GM12878 (cell line): ENCODE measurements at regions of chr4 and their contacts with region 1.

Region 1: DNA sequence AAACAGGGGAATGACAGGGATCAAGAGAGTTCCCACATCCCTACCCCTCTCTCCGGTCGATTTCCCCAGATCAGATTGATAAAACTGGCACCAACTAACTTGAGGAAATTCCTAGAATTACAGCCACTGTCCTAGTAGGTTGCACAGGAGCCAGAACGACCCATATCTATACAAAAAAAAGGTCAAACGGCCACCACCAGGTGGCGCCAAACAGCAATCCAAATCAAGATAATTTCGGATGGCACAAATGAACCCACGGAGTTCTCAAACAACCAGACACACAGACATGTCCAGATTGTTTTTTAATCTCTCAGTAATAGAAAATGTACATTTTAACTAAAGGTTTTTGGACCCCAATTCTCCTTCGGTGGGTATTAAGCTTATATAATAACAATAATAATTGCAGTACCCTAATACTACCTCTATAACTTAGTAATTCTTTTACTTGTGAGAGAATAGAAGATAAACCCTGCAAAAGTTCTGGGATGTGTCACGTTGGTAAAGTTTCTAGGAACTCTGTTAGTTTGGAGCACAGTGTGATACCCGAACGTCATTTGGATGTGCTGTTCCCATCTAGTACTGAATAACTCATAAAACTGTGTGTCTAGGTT is 212.6 kb downstream of the SPOCK3 start:
- DNase-seq: peak; percentile 30
- ATAC-seq: peak; percentile 75
- H3K4me3 ChIP-seq: no peak overlapping the region
- H3K27ac ChIP-seq: no peak overlapping the region
- H3K4me1 ChIP-seq: no peaks in the 10 kb centered on the region
- H3K27me3 ChIP-seq: no peaks in the 10 kb centered on the region
- CTCF ChIP-seq: peak; percentile 70 to 75 (median 74)
- EP300 ChIP-seq: no peak
- POLR2A ChIP-seq: no peak
- RAD21 ChIP-seq: peak; percentile 76

Region 2: GRCh38 chr4:166662266-166662843 is 359.3 kb before region 1 on chr4:
- CTCF ChIA-PET with region 1: no interaction called
- POLR2A ChIA-PET with region 1: no interaction called
- RAD21 ChIA-PET with region 1: no interaction called
- SMC1A ChIA-PET with region 1: no interaction called
- in situ Hi-C with region 1: no loop called
- intact Hi-C with region 1: loop called (anchors 2 kb)
- DNase-seq: peak; percentile 92
- ATAC-seq: peak; percentile 95
- H3K4me3 ChIP-seq: no peak overlapping the region
- H3K27ac ChIP-seq: peak overlapping the region; percentile 93
- H3K4me1 ChIP-seq: peaks cover 8% of the 10 kb centered on the region
- H3K27me3 ChIP-seq: no peaks in the 10 kb centered on the region
- CTCF ChIP-seq: no peak
- EP300 ChIP-seq: peak; percentile 100
- POLR2A ChIP-seq: no peak
- RAD21 ChIP-seq: no peak

Region 3: GRCh38 chr4:166903408-166903807 is 118.2 kb before region 1 on chr4:
- CTCF ChIA-PET with region 1: no interaction called
- POLR2A ChIA-PET with region 1: no interaction called
- RAD21 ChIA-PET with region 1: no interaction called
- SMC1A ChIA-PET with region 1: no interaction called
- in situ Hi-C with region 1: no loop called
- intact Hi-C with region 1: no loop called
- DNase-seq: no peak
- ATAC-seq: peak; percentile 49
- H3K4me3 ChIP-seq: no peak overlapping the region
- H3K27ac ChIP-seq: no peak overlapping the region
- H3K4me1 ChIP-seq: no peaks in the 10 kb centered on the region
- H3K27me3 ChIP-seq: no peaks in the 10 kb centered on the region
- CTCF ChIP-seq: no peak
- EP300 ChIP-seq: no peak
- POLR2A ChIP-seq: no peak
- RAD21 ChIP-seq: no peak

Region 4: GRCh38 chr4:167032871-167033270 is 11.2 kb after region 1 on chr4:
- CTCF ChIA-PET with region 1: interaction called, 11 read pairs
- POLR2A ChIA-PET with region 1: no interaction called
- RAD21 ChIA-PET with region 1: no interaction called
- SMC1A ChIA-PET with region 1: interaction called, 32 read pairs
- in situ Hi-C with region 1: no loop called
- intact Hi-C with region 1: no loop called
- DNase-seq: no peak
- ATAC-seq: no peak
- H3K4me3 ChIP-seq: no peak overlapping the region
- H3K27ac ChIP-seq: no peak overlapping the region
- H3K4me1 ChIP-seq: no peaks in the 10 kb centered on the region
- H3K27me3 ChIP-seq: no peaks in the 10 kb centered on the region
- CTCF ChIP-seq: no peak
- EP300 ChIP-seq: no peak
- POLR2A ChIP-seq: no peak
- RAD21 ChIP-seq: no peak

Region 5: GRCh38 chr4:167234316-167234881 is 212.7 kb after region 1 on chr4 and contains the start of gene SPOCK3:
- CTCF ChIA-PET with region 1: no interaction called
- POLR2A ChIA-PET with region 1: no interaction called
- RAD21 ChIA-PET with region 1: interaction called, 3 read pairs
- SMC1A ChIA-PET with region 1: interaction called, 3 read pairs
- in situ Hi-C with region 1: no loop called
- intact Hi-C with region 1: loop called (anchors 5 kb)
- DNase-seq: no peak
- ATAC-seq: peak; percentile 78
- H3K4me3 ChIP-seq: no peak within 1 kb of the TSS; the same call in 1 of the 2 replicates
- H3K27ac ChIP-seq: no peak within 1 kb of the TSS
- H3K4me1 ChIP-seq: no peaks in the 10 kb centered on the region
- H3K27me3 ChIP-seq: peaks cover 4 to 10% of the 10 kb centered on the region in 2 experiments
- CTCF ChIP-seq: no peak
- EP300 ChIP-seq: no peak
- POLR2A ChIP-seq: no peak
- RAD21 ChIP-seq: no peak
- polyA plus RNA-seq, gene SPOCK3: 0.09 to 0.16 TPM

Region 6: GRCh38 chr4:167622481-167623246 is 601.0 kb after region 1 on chr4:
- CTCF ChIA-PET with region 1: interaction called, 10 read pairs
- POLR2A ChIA-PET with region 1: no interaction called
- RAD21 ChIA-PET with region 1: interaction called, 9 read pairs
- SMC1A ChIA-PET with region 1: interaction called, 9 read pairs
- in situ Hi-C with region 1: loop called (anchors 10 kb)
- intact Hi-C with region 1: loop called (anchors 1 kb)
- DNase-seq: no peak
- ATAC-seq: peak; percentile 99
- H3K4me3 ChIP-seq: no peak overlapping the region
- H3K27ac ChIP-seq: no peak overlapping the region
- H3K4me1 ChIP-seq: no peaks in the 10 kb centered on the region
- H3K27me3 ChIP-seq: no peaks in the 10 kb centered on the region
- CTCF ChIP-seq: peak; percentile 63 to 82 (median 81)
- EP300 ChIP-seq: no peak
- POLR2A ChIP-seq: no peak
- RAD21 ChIP-seq: peak; percentile 70

Region 7: DNA sequence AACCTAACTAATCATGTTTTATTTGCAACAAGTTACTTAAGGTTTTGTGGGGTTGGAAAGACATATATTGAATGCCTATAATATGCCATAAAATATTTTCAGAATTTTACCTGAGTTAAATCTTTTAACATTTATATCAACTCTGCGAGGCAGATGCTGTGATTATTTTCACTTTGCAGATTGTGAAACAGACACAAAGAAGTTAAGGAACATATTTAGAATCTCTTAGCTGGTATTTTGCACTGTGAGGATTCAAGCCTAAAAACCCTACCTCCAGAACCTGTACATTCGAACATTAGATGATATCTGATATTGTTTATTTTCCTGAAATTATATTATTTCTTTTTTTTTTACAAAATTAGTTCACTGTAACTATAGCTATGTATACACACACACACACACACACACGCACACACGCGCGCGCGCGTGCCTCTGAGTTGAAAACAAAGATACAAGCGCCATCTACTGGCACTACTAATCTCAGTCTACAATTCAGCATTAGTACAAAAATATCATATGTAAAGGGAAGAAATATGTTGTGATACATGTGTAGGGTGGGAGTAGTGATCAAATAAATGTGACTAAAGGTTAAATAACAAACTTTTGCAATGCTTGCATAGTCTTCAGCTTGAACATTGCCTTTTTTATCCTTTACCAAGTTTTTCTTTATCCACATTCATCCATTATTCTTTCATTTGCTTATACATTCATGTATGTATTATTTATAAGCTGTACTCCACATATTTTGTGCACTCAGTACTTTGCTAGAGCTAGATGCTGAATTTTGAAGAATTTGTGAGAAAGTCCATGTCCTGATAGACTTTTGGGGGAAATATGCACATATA is 1132.2 kb after region 1 on chr4:
- CTCF ChIA-PET with region 1: interaction called, 8 read pairs
- POLR2A ChIA-PET with region 1: no interaction called
- RAD21 ChIA-PET with region 1: no interaction called
- SMC1A ChIA-PET with region 1: no interaction called
- in situ Hi-C with region 1: no loop called
- intact Hi-C with region 1: loop called (anchors 5 kb)
- DNase-seq: peak; percentile 4
- ATAC-seq: peak; percentile 95
- H3K4me3 ChIP-seq: no peak overlapping the region
- H3K27ac ChIP-seq: no peak overlapping the region
- H3K4me1 ChIP-seq: no peaks in the 10 kb centered on the region
- H3K27me3 ChIP-seq: no peaks in the 10 kb centered on the region
- CTCF ChIP-seq: peak; percentile 56 to 71 (median 62)
- EP300 ChIP-seq: no peak
- POLR2A ChIP-seq: no peak
- RAD21 ChIP-seq: peak; percentile 63